HCT116 (cell line): ENCODE measurements at regions of chr1 and their contacts with region 1.

Region 1: GRCh38 chr1:110460253-110461220 is 9.6 kb downstream of the PROK1 start:
- DNase-seq: peak; percentile 69
- ATAC-seq: peak; percentile 83
- H3K4me3 ChIP-seq: no peak overlapping the region
- H3K27ac ChIP-seq: no peak overlapping the region
- H3K4me1 ChIP-seq: peaks cover 0 to 27% of the 10 kb centered on the region in 2 experiments; a peak in 3 of 4 replicates
- H3K27me3 ChIP-seq: no peaks in the 10 kb centered on the region
- CTCF ChIP-seq: peak; percentile 95 to 97 (median 96); a peak in 5 of 6 replicates
- POLR2A ChIP-seq: no peak
- RAD21 ChIP-seq: peak; percentile 98

Region 2: GRCh38 chr1:110019770-110020169 is 440.8 kb before region 1 on chr1:
- CTCF ChIA-PET with region 1: no interaction called
- POLR2A ChIA-PET with region 1: no interaction called
- RAD21 ChIA-PET with region 1: no interaction called
- intact Hi-C with region 1: loop called (anchors 10 kb)
- DNase-seq: no peak
- ATAC-seq: no peak
- H3K4me3 ChIP-seq: no peak overlapping the region
- H3K27ac ChIP-seq: no peak overlapping the region
- H3K4me1 ChIP-seq: no peaks in the 10 kb centered on the region
- H3K27me3 ChIP-seq: no peaks in the 10 kb centered on the region
- CTCF ChIP-seq: no peak
- POLR2A ChIP-seq: no peak
- RAD21 ChIP-seq: no peak

Region 3: GRCh38 chr1:110087812-110088738 is 372.5 kb before region 1 on chr1:
- CTCF ChIA-PET with region 1: interaction called, 17 read pairs
- POLR2A ChIA-PET with region 1: no interaction called
- RAD21 ChIA-PET with region 1: interaction called in 1 of 2 experiments, 5 read pairs
- intact Hi-C with region 1: no loop called
- DNase-seq: peak; percentile 31
- ATAC-seq: peak; percentile 98
- H3K4me3 ChIP-seq: no peak overlapping the region
- H3K27ac ChIP-seq: no peak overlapping the region
- H3K4me1 ChIP-seq: no peaks in the 10 kb centered on the region
- H3K27me3 ChIP-seq: peaks cover 9% of the 10 kb centered on the region; the same call in 1 of the 2 replicates
- CTCF ChIP-seq: peak; percentile 58 to 74 (median 70)
- POLR2A ChIP-seq: no peak
- RAD21 ChIP-seq: peak; percentile 67

Region 4: GRCh38 chr1:110203021-110203661 is 257.4 kb before region 1 on chr1:
- CTCF ChIA-PET with region 1: interaction called, 107 read pairs
- POLR2A ChIA-PET with region 1: interaction called, 10 read pairs
- RAD21 ChIA-PET with region 1: interaction called, 13 to 34 read pairs
- intact Hi-C with region 1: loop called (anchors 1 kb)
- DNase-seq: peak; percentile 55
- ATAC-seq: peak; percentile 71
- H3K4me3 ChIP-seq: no peak overlapping the region
- H3K27ac ChIP-seq: 0 out of 2 replicates have a peak overlapping the region, but pooled peaks have one; percentile 3
- H3K4me1 ChIP-seq: peaks cover 0 to 15% of the 10 kb centered on the region in 2 experiments; a peak in 2 of 4 replicates
- H3K27me3 ChIP-seq: no peaks in the 10 kb centered on the region
- CTCF ChIP-seq: peak; percentile 75 to 89 (median 88)
- POLR2A ChIP-seq: no peak
- RAD21 ChIP-seq: peak; percentile 93

Region 5: GRCh38 chr1:110312188-110313121 is 148.1 kb before region 1 on chr1:
- CTCF ChIA-PET with region 1: interaction called, 10 read pairs
- POLR2A ChIA-PET with region 1: no interaction called
- RAD21 ChIA-PET with region 1: interaction called in 1 of 2 experiments, 4 read pairs
- intact Hi-C with region 1: loop called (anchors 1 kb)
- DNase-seq: peak; percentile 54
- ATAC-seq: peak; percentile 99
- H3K4me3 ChIP-seq: no peak overlapping the region
- H3K27ac ChIP-seq: no peak overlapping the region
- H3K4me1 ChIP-seq: peaks cover 2 to 20% of the 10 kb centered on the region in 2 experiments; a peak in 2 of 4 replicates
- H3K27me3 ChIP-seq: no peaks in the 10 kb centered on the region
- CTCF ChIP-seq: peak; percentile 93 to 97 (median 93)
- POLR2A ChIP-seq: no peak
- RAD21 ChIP-seq: peak; percentile 99

Region 6: DNA sequence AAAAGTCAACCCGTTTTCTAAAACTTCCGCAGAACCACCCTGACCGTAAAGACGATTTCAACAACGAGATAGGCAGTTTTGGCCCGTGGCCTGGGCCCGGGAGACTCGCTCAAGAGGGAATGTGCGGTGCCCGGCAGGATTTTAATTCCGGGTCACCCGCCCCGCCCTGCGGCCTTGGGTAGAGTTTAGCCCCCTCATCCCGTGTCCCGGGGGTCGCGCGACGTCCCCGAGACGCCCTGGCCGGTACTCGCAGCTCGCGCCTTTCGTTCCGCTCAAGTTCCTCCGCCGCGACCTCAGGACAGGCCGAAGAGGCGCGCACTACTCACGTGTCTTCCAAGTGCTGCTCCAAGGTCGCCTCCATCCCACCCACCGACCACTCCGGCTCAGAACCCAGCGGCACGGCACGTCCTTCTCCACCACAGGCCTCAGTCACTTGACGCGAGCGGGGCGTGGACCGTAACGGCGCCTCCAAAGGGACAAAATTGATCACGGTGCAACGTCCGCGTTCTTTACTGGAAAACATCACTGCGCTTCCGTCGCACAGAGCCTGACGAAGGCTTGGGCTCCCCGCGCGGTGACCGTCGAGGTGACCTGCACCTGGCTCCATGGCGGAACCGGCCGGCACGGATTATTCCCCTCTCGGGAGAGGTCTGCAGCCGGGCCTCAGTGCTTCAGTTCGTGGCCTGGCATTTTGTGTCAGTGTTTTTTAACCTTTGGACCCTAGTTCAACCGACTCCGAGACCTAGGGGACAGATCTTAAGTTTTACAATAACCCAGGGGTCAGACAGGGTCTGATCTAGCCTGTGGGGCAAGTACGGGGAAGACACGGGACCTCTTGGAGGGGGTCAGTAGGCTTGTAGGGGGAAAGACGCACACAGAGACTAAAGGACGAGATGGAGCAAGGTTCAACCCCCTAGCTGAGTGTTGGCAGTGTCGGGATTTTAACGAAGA is 53.0 kb before region 1 on chr1 and contains the start of gene LAMTOR5:
- CTCF ChIA-PET with region 1: interaction called, 56 read pairs
- POLR2A ChIA-PET with region 1: interaction called, 11 read pairs
- RAD21 ChIA-PET with region 1: interaction called, 22 to 23 read pairs
- intact Hi-C with region 1: loop called (anchors 1 kb)
- DNase-seq: peak; percentile 93
- ATAC-seq: peak; percentile 89
- H3K4me3 ChIP-seq: peak within 1 kb of the TSS; percentile 96 to 98
- H3K27ac ChIP-seq: peak within 1 kb of the TSS; percentile 80
- H3K4me1 ChIP-seq: peaks cover 4 to 14% of the 10 kb centered on the region in 2 experiments; a peak in 3 of 4 replicates
- H3K27me3 ChIP-seq: no peaks in the 10 kb centered on the region
- CTCF ChIP-seq: no peak
- POLR2A ChIP-seq: peak; percentile 63
- RAD21 ChIP-seq: no peak
- total RNA-seq, gene LAMTOR5: 137 TPM

Region 7: GRCh38 chr1:110433803-110434202 is 26.7 kb before region 1 on chr1:
- CTCF ChIA-PET with region 1: interaction called, 15 read pairs
- POLR2A ChIA-PET with region 1: interaction called, 3 read pairs
- RAD21 ChIA-PET with region 1: interaction called, 4 to 7 read pairs
- intact Hi-C with region 1: no loop called
- DNase-seq: peak; percentile 51
- ATAC-seq: peak; percentile 99
- H3K4me3 ChIP-seq: no peak overlapping the region
- H3K27ac ChIP-seq: no peak overlapping the region
- H3K4me1 ChIP-seq: peaks cover 24 to 39% of the 10 kb centered on the region in 2 experiments
- H3K27me3 ChIP-seq: 0 out of 2 replicates have a peak, but pooled peaks cover 6% of the 10 kb centered on the region
- CTCF ChIP-seq: peak in 2 of 3 experiments; percentile 33 to 40; a peak in 3 of 6 replicates
- POLR2A ChIP-seq: no peak
- RAD21 ChIP-seq: peak; percentile 33; the same call in 1 of the 2 replicates